Left ventricle myocardium superior (tissue), 1 donor: ENCODE measurements at regions of chr14 and their contacts with region 1.

Region 1: DNA sequence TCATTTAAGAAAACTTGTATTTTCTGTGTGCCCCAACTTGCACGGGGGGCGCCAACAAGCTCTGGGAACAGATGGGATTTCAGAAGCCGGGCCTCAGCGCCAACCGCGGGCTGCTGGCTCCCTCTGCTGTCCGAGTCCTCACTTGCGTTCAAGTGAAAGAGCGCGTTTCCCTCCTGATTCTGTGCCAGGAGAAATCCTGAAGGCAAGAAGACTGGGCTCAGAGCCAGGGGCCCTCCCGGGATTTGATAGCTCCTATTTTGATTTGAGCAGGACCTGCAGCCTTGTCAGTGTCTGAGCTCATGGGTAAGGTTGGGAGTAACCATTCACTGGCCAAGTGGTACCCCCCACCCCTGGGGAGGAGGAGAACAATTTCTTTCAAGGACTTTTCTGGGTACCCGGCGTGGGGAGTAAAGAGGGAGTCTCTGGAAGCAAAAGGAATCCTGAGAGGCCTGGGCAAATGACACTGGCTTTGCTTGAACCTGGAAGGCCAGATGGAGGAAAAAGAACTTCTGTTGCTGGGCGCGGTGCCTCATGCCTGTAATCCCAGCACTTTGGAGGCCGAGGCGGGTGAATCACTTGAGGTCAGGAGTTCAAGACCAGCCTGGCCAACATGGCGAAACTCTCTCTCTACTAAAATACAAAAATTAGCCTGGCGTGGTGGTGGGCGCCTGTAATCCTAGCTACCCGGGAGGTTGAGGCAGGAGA is 179.0 kb upstream of the RGS6 start:
- DNase-seq: peak; percentile 93
- ATAC-seq: peak; percentile 91

Region 2: GRCh38 chr14:71138448-71139293 is 614.6 kb before region 1 on chr14:
- intact Hi-C with region 1: loop called (anchors 5 kb)
- DNase-seq: peak; percentile 58
- ATAC-seq: peak; percentile 84

Region 3: DNA sequence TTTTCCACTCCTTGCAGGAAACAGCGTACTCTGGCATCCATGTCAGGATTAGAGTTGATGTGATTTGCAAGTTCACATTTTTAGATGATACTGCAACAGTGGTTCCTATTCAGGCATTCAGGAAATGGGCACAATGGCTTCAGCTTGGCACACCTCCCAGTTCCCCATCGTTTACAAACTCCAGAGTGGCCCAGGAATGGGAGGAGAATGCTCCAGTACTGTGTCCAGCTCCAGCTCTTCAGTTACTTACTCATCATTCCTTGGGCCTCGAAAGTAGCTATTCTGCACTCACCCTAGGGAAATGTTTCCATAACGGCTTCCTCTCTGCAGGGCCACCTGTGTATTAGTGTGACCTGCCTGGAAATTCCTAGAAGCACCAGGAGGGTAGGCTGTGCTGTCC is 60.8 kb before region 1 on chr14:
- intact Hi-C with region 1: no loop called
- DNase-seq: no peak
- ATAC-seq: no peak